CD8-positive, alpha-beta T cell (primary cell): ENCODE measurements at regions of chr1 and their contacts with region 1.

Region 1: GRCh38 chr1:62841587-62842169 is 57.7 kb downstream of the ATG4C start:
- DNase-seq: peak in 3 of 9 experiments; percentile 27 to 69 (median 62)
- ATAC-seq: no peak
- H3K4me3 ChIP-seq: no peak overlapping the region
- H3K4me3 Mint-ChIP-seq: no peak overlapping the region
- H3K27ac ChIP-seq: no peak overlapping the region
- H3K27ac Mint-ChIP-seq: no peak overlapping the region
- H3K4me1 ChIP-seq: peaks cover 3% of the 10 kb centered on the region
- H3K4me1 Mint-ChIP-seq: peaks cover 2% of the 10 kb centered on the region
- H3K27me3 ChIP-seq: no peaks in the 10 kb centered on the region
- H3K27me3 Mint-ChIP-seq: no peaks in the 10 kb centered on the region
- CTCF ChIP-seq: peak; percentile 92

Region 2: DNA sequence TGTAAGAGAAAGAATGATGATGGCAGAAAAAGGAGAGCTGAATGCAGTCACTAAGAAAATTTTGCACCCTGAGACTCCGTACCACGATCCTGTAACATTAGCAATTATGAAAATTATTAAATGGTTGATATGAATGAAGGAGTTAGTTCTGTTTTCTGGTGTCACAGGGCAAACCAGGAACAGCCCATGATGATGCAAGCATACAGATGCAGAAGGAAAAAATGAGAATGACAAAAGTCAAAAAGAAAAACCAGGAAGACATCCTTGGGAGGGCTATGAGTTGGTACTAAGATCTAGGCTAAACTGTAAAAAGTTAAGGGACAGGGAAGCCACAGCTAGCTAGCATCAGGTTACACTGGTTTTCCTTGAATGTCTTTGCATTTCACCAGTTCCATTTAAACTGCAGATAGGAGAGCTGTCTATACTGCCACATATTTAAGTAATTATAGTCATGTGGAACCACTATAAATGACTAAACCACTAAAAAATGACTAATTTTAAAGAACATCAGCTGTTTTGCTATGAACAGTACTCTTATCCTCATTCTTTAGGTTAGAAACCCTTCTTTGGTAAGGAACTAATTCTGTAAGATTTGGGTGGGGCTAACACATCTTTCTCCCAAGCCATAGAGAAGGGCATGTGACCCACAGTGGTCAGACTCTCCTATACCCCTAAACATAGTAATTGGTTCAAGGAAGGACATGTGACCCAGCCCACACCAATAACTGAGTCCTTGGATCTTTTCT is 164.9 kb before region 1 on chr1:
- CTCF ChIA-PET with region 1: no interaction called
- POLR2A ChIA-PET with region 1: no interaction called
- intact Hi-C with region 1: no loop called
- DNase-seq: no peak
- ATAC-seq: no peak
- H3K4me3 ChIP-seq: no peak overlapping the region
- H3K4me3 Mint-ChIP-seq: no peak overlapping the region
- H3K27ac ChIP-seq: no peak overlapping the region
- H3K27ac Mint-ChIP-seq: no peak overlapping the region
- H3K4me1 ChIP-seq: no peaks in the 10 kb centered on the region
- H3K4me1 Mint-ChIP-seq: no peaks in the 10 kb centered on the region
- H3K27me3 ChIP-seq: no peaks in the 10 kb centered on the region
- H3K27me3 Mint-ChIP-seq: no peaks in the 10 kb centered on the region
- CTCF ChIP-seq: no peak

Region 3: DNA sequence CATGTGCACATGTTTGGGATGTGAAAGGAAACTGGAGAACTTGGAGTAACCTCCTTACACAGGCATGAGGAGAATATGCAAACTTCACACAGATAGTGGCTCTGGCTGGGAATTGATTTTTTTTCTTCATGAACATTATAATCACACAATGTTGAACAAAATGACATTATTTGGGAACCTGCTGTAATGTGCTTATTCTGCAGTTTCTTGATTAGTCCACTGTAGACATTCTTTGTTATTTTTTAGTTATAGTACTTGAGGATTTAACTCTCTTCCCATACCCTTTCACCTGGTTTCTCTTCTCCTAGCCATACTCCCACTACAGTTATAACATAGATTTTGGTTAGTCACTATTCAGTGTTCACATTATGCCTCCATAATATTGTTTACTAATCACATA is 10.6 kb after region 1 on chr1:
- CTCF ChIA-PET with region 1: interaction called, 12 read pairs
- POLR2A ChIA-PET with region 1: interaction called, 3 read pairs
- intact Hi-C with region 1: no loop called
- DNase-seq: no peak
- ATAC-seq: no peak
- H3K4me3 ChIP-seq: no peak overlapping the region
- H3K4me3 Mint-ChIP-seq: no peak overlapping the region
- H3K27ac ChIP-seq: no peak overlapping the region
- H3K27ac Mint-ChIP-seq: no peak overlapping the region
- H3K4me1 ChIP-seq: no peaks in the 10 kb centered on the region
- H3K4me1 Mint-ChIP-seq: no peaks in the 10 kb centered on the region
- H3K27me3 ChIP-seq: no peaks in the 10 kb centered on the region
- H3K27me3 Mint-ChIP-seq: no peaks in the 10 kb centered on the region
- CTCF ChIP-seq: no peak

Region 4: DNA sequence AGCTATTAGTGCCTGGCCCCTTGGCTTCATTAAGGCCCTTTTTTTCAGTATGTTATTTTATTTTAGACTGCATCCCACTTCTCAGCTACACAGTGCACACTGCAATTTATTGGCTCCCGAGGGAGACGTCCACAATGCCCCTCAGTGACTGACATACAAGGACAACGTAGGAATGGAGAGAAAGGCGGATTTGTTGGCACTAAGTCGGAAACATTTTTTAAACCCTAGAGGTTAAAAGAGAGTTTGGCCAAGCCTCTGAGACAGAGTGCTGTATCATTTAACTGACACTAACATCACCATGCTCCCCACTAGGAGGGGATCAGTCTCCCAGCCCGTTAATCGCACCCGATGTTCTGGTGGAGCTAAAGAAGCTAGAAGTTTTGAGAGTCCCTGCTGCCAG is 434.9 kb after region 1 on chr1:
- CTCF ChIA-PET with region 1: no interaction called
- POLR2A ChIA-PET with region 1: no interaction called
- intact Hi-C with region 1: no loop called
- DNase-seq: no peak
- ATAC-seq: no peak
- H3K4me3 ChIP-seq: no peak overlapping the region
- H3K4me3 Mint-ChIP-seq: no peak overlapping the region
- H3K27ac ChIP-seq: no peak overlapping the region
- H3K27ac Mint-ChIP-seq: no peak overlapping the region
- H3K4me1 ChIP-seq: no peaks in the 10 kb centered on the region
- H3K4me1 Mint-ChIP-seq: no peaks in the 10 kb centered on the region
- H3K27me3 ChIP-seq: no peaks in the 10 kb centered on the region
- H3K27me3 Mint-ChIP-seq: peaks cover 7% of the 10 kb centered on the region
- CTCF ChIP-seq: no peak

Region 5: DNA sequence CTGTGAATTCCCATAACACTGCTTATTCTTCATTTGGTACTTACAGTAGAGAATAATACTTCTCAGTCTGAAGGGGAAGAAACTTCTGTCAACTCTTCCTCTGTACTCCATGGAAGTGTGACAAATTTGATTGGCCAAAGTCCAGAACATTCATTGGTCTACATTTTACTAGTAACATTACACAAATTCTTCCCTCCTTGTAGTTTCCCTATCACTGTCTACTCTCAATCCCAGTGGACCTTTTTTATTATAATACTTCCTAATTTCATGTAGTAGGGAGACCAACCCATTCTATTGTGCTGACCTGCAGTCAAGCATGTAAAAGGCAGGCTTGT is 600.4 kb after region 1 on chr1:
- CTCF ChIA-PET with region 1: interaction called, 6 read pairs
- POLR2A ChIA-PET with region 1: no interaction called
- intact Hi-C with region 1: loop called (anchors 1 kb)
- DNase-seq: no peak
- ATAC-seq: no peak
- H3K4me3 ChIP-seq: no peak overlapping the region
- H3K4me3 Mint-ChIP-seq: no peak overlapping the region
- H3K27ac ChIP-seq: no peak overlapping the region
- H3K27ac Mint-ChIP-seq: no peak overlapping the region
- H3K4me1 ChIP-seq: no peaks in the 10 kb centered on the region
- H3K4me1 Mint-ChIP-seq: no peaks in the 10 kb centered on the region
- H3K27me3 ChIP-seq: no peaks in the 10 kb centered on the region
- H3K27me3 Mint-ChIP-seq: no peaks in the 10 kb centered on the region
- CTCF ChIP-seq: no peak

Region 6: DNA sequence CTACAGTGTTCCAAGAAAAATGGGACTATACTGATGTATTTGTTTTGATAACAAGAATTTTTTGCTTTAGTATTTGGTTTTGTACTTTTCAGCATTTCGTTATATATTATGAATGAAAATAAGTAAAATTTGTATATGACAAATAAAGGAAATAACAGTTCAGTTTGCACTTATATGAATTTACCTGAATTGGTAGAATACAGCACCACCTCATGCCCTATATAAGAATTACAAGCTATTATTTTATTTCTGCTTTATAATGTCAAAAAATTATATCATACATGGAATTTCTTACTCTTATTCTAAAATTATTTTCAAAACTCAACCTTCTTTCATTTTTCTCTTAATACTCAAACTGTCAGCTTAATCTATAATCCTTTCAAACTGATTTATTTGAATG is 696.3 kb after region 1 on chr1:
- CTCF ChIA-PET with region 1: interaction called, 19 read pairs
- POLR2A ChIA-PET with region 1: no interaction called
- intact Hi-C with region 1: loop called (anchors 1 to 2 kb)
- DNase-seq: peak in 2 of 9 experiments; percentile 10 to 27
- ATAC-seq: no peak
- H3K4me3 ChIP-seq: no peak overlapping the region
- H3K4me3 Mint-ChIP-seq: no peak overlapping the region
- H3K27ac ChIP-seq: no peak overlapping the region
- H3K27ac Mint-ChIP-seq: no peak overlapping the region
- H3K4me1 ChIP-seq: no peaks in the 10 kb centered on the region
- H3K4me1 Mint-ChIP-seq: no peaks in the 10 kb centered on the region
- H3K27me3 ChIP-seq: no peaks in the 10 kb centered on the region
- H3K27me3 Mint-ChIP-seq: no peaks in the 10 kb centered on the region
- CTCF ChIP-seq: peak; percentile 71